ENCODE measurements at regions of chr1 and their contacts with region 1.

Region 1: GRCh38 chr1:54996359-54996868 is 2.3 kb upstream of the BSND start:
- DNase-seq: peak in 41 of 42 donors; percentile 45 to 89 (median 77)

Region 2: DNA sequence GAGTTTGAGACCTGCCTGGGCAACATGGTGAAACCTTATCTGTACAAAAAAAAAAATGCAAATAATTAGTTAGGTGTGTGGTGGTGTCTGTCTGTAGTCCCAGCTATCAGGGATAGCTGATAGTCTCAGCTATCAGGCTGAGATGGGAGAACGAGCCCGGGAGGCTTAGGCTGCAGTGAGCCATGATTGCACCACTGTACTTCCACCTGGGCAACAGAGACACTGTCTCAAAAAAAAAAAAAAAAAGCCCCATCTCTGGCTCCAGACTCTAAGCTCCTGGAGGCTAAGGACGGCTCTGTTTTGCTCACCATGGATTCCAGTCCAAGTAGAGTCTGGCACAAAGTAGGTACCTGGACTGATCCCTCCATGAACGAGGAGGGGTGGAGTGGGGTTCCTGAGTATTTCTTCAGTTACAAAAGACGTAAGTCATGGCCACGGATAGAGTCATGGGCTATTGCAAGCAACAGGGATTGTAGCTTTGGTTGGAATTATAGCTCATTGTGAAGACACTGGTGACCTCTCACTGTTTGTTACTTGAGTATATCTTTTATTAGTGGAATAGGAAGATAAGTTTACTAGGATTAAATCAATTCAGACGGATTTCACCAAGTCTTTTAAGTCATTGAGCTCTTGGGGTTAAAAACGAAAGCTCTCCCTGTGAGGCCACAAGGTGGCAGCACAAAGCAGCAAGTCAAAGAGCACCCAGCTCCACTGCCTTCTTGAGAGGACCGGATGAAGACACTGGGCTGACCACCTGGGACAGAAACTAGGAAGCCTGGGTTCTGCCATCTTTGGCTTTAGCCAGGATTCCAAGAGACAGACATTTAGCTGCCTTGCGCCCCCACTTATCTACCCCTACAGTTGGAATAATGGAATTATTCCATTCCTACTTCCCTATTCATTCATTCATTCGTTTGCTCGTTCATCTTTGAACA is 51.5 kb before region 1 on chr1:
- intact Hi-C with region 1: loop called (anchors 2 kb)
- DNase-seq: peak; percentile 42 to 91 (median 78)

Region 3: GRCh38 chr1:55127827-55128343 is 131.5 kb after region 1 on chr1:
- intact Hi-C with region 1: no loop called
- DNase-seq: no peak

Measured in head of caudate nucleus (tissue), 42 donors.